ENCODE measurements at regions of chr3 and their contacts with region 1.

Region 1: GRCh38 chr3:173045770-173046382 is 95.2 kb downstream of the SPATA16 start:
- DNase-seq: no peak
- ATAC-seq: no peak
- H3K4me3 ChIP-seq: no peak overlapping the region
- H3K27ac ChIP-seq: no peak overlapping the region
- H3K4me1 ChIP-seq: no peaks in the 10 kb centered on the region
- H3K27me3 ChIP-seq: no peaks in the 10 kb centered on the region

Region 2: DNA sequence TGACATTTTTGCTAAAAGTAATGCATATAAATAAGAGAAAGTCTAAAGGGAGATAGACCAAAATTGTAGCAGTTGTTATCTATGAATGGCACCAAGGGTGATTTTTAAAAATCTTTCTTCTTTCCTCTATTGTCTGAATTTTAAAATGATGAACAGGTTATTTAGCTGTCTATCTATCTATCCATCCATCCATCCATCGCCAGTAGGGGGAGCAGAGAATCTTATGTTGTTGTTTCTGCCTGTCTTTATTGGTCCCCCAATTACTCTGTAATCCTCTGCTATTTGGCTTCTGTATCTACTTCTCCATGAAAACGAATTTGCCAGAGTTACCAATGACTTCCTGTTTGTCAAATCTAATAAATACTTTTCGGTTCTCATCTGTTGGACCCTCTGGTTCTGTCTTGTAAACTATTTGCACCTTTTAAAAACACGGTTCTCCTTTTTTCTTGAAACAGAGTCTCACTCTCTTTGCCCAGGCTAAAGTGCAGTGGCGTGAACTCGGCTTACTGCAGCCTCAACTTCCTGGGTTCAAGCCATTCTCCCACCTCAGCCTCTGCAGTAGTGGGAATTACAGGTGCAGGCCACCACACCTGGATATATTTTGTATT is 209.4 kb before region 1 on chr3:
- intact Hi-C with region 1: loop called in 3 of 4 experiments (anchors 5 to 10 kb)
- DNase-seq: peak in 1 of 3 donors; percentile 30
- ATAC-seq: peak in 1 of 2 donors; percentile 72
- H3K4me3 ChIP-seq: no peak overlapping the region
- H3K27ac ChIP-seq: no peak overlapping the region
- H3K4me1 ChIP-seq: no peaks in the 10 kb centered on the region
- H3K27me3 ChIP-seq: no peaks in the 10 kb centered on the region

Region 3: DNA sequence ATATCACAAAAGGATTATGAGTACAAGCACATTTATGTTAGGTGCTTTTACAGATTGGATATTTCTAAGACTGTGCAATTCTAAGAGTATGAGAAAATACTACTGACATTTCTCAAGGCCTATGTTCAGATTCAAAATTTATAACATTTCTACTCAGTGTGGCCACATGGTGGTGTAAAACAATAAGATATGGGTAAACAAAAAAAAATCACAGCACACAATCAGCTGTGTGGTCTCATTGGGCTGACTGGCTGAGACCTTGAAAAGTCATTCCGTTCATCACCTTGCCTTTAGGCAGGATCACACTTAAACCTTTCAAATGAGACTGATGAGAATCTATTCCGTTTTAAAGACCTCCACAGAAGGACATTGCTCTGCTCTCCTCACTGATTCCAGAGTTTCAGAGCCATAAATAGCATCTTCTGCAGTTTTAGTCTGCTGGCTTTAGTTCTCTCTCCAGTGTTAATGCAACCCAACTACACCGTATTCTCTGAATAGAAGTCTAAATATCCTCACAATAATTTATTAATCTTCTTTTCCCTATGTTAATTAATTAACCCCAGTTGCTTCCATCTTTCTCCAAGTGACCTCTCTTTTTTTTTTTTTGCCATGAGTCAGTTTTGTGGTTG is 63.0 kb before region 1 on chr3:
- intact Hi-C with region 1: loop called in 1 of 4 experiments (anchors 5 kb)
- DNase-seq: no peak
- ATAC-seq: peak in 1 of 2 donors; percentile 31
- H3K4me3 ChIP-seq: no peak overlapping the region
- H3K27ac ChIP-seq: no peak overlapping the region
- H3K4me1 ChIP-seq: peaks cover 3% of the 10 kb centered on the region
- H3K27me3 ChIP-seq: no peaks in the 10 kb centered on the region

Region 4: GRCh38 chr3:173238091-173238490 is 192.2 kb after region 1 on chr3:
- intact Hi-C with region 1: no loop called
- DNase-seq: no peak
- ATAC-seq: no peak
- H3K4me3 ChIP-seq: no peak overlapping the region
- H3K27ac ChIP-seq: no peak overlapping the region
- H3K4me1 ChIP-seq: no peaks in the 10 kb centered on the region
- H3K27me3 ChIP-seq: no peaks in the 10 kb centered on the region

Measured in right cardiac atrium (tissue), 5 donors.